Right lobe of liver (tissue), 6 donors: ENCODE measurements at regions of chr18 and their contacts with region 1.

Region 1: GRCh38 chr18:80034068-80034851 is at the start of gene RBFA:
- DNase-seq: peak; percentile 100
- ATAC-seq: peak; percentile 89 to 95 (median 91)
- H3K4me3 ChIP-seq: peak within 1 kb of the TSS; percentile 70 to 77 (median 77)
- H3K27ac ChIP-seq: peak within 1 kb of the TSS; percentile 49 to 78 (median 55)
- H3K4me1 ChIP-seq: peaks cover 0 to 8% (median 3%) of the 10 kb centered on the region in 4 donors
- H3K27me3 ChIP-seq: no peaks in the 10 kb centered on the region
- CTCF ChIP-seq: peak; percentile 51 to 55 (median 53)
- POLR2A ChIP-seq: peak; percentile 73
- total RNA-seq, gene RBFA: 12.3 to 36.6 (median 18.8) TPM

Region 2: GRCh38 chr18:79912409-79912991 is 121.8 kb before region 1 on chr18:
- intact Hi-C with region 1: loop called in 1 of 2 experiments (anchors 10 kb)
- DNase-seq: peak; percentile 34 to 62 (median 52)
- ATAC-seq: peak; percentile 39 to 67 (median 44)
- H3K4me3 ChIP-seq: no peak overlapping the region
- H3K27ac ChIP-seq: no peak overlapping the region
- H3K4me1 ChIP-seq: no peaks in the 10 kb centered on the region
- H3K27me3 ChIP-seq: no peaks in the 10 kb centered on the region
- CTCF ChIP-seq: no peak
- POLR2A ChIP-seq: no peak

Region 3: DNA sequence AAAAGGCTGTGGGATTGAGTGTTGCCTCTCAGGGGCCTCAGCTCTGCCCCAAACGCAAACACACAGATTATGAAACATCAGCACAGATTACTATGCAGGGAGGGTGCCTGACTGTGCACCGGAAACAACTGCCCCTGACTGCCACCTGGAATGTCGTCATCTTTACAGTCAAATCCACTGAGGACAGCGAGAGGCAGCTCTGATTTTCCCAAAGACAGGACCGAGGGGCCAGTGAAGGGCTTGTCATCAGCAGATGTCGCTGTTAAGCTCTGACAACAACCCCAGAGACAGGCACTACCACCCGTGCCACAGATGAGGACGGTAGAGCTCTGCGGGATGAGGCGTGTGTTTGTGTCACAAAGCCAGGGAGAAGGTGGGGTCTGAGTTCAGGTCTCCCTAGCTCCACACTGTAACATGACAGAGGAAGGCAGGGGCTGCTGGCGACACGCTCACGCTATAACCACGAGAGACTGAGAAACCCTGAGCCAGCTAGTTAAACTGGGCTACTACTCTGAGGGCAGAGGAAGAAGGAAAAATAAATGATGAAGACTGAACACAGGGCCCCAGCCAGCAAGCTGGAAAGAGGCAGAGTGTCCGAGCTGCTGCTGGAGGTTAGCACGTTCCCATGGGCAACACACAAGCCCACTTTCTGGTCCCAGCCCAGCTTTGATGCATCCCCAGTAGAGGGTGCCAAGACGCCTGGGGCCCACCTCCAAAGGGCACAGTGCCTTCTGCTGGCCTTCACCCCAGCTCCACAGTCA is 166.1 kb after region 1 on chr18:
- intact Hi-C with region 1: no loop called
- DNase-seq: no peak
- ATAC-seq: peak; percentile 36 to 76 (median 58)
- H3K4me3 ChIP-seq: no peak overlapping the region
- H3K27ac ChIP-seq: peak overlapping the region in 1 of 3 donors; percentile 8
- H3K4me1 ChIP-seq: no peaks in the 10 kb centered on the region
- H3K27me3 ChIP-seq: no peaks in the 10 kb centered on the region
- CTCF ChIP-seq: peak; percentile 19 to 27 (median 24)
- POLR2A ChIP-seq: no peak